ENCODE measurements at regions of chr1 and their contacts with region 1.

Region 1: DNA sequence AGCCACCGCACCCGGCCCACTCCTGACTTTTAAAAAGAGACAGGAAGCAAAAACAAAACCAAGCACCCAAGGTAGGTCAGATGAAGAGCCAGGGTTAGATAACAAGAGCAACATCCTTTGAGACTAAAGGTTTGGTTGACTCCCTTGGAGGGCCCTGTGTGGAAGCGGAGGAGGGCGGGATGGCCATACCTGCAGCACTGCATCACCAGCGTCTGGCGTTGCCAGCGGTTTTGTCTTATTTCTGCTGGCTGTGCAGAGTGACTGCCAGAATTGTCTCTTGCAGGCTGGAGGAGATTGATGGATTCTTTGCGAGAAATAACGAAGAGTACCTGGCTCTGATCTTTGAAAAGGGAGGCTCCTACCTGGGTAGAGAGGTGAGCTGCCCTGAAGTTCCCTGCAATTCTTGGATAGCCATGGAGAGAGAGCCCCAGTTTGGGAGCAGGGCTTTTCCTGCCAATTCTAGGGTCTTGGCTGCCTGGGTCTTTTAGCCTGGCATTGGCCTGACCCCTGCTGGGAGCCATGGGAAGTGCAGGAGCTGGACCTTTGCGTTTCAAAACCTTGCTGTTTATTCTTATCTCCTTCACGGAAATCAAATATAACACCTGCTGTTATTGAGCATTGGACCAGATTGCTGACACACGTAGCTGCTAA is 24.0 kb downstream of the QSOX1 start:
- DNase-seq: peak; percentile 48 to 78 (median 62)
- H3K4me3 ChIP-seq: no peak overlapping the region
- H3K27ac ChIP-seq: peak overlapping the region in 1 of 59 donors; percentile 27
- H3K27me3 ChIP-seq: no peaks in the 10 kb centered on the region
- CTCF ChIP-seq: peak; percentile 66 to 98 (median 92)

Region 2: GRCh38 chr1:179706339-179706941 is 472.2 kb before region 1 on chr1:
- intact Hi-C with region 1: loop called in 1 of 2 experiments (anchors 5 kb)
- DNase-seq: peak in 5 of 10 donors; percentile 17 to 58 (median 35)
- H3K4me3 ChIP-seq: no peak overlapping the region
- H3K27ac ChIP-seq: no peak overlapping the region
- H3K27me3 ChIP-seq: no peaks in the 10 kb centered on the region
- CTCF ChIP-seq: peak; percentile 38 to 91 (median 76)

Region 3: DNA sequence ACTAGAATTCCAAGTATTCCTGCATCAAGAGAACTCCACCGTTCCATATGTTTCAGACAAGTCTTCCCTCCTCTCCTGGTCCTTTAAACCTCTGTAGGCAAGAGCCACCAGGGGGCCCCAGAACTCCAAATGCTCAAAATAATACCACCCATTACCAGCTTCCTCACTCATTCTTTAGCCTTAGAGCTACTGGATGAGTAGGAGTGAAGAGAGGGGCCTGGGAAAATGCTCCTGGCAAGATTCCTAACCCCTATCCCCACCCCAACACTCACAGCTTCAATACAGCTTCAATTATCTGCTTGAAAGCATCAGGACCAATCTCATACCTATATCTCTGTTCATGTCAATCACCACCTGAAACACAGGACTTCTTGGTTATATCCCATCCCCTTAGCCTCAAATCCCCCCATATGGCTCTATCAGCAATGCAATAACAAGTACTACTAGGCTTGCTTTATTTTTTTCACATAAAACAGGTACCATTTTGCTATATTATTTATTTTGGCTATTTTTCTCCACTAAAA is 310.8 kb before region 1 on chr1:
- intact Hi-C with region 1: loop called in 1 of 2 experiments (anchors 2 kb)
- DNase-seq: peak in 2 of 10 donors; percentile 14 to 28
- H3K4me3 ChIP-seq: no peak overlapping the region
- H3K27ac ChIP-seq: no peak overlapping the region
- H3K27me3 ChIP-seq: no peaks in the 10 kb centered on the region
- CTCF ChIP-seq: peak in 54 of 56 donors; percentile 13 to 70 (median 46)

Region 4: DNA sequence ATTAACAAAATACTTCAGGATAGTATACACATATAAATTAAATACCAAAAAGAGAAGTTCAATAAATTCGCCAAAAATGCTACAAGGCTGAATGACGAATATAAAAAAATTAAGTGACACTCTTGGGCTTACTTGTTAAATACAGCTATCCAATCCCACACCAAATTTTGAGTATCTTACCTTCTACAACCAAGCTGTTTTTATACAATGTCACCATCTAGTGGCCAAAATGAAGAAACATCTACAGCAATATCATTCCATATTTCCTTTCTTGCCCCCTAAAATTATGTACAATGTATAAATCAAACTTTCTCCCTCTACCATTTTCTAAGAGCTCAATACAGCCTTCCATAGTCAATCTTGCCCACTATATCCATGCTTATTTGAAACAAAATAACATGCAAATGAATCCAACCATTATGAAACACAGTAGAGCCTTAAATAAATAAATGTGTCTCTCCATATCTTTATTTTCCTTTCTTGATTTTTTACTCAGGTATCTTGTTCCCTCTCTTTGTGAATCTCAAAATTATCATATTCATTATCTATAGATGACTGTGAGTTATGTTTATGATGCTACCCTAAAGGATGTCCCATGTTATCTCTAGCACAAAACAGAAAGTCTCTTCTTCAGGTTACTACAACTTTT is 237.5 kb after region 1 on chr1:
- intact Hi-C with region 1: loop called in 1 of 2 experiments (anchors 5 kb)
- DNase-seq: no peak
- H3K4me3 ChIP-seq: no peak overlapping the region
- H3K27ac ChIP-seq: no peak overlapping the region
- H3K27me3 ChIP-seq: no peaks in the 10 kb centered on the region
- CTCF ChIP-seq: peak in 55 of 56 donors; percentile 23 to 73 (median 53)